G401 (cell line): ENCODE measurements at regions of chr5 and their contacts with region 1.

Region 1: DNA sequence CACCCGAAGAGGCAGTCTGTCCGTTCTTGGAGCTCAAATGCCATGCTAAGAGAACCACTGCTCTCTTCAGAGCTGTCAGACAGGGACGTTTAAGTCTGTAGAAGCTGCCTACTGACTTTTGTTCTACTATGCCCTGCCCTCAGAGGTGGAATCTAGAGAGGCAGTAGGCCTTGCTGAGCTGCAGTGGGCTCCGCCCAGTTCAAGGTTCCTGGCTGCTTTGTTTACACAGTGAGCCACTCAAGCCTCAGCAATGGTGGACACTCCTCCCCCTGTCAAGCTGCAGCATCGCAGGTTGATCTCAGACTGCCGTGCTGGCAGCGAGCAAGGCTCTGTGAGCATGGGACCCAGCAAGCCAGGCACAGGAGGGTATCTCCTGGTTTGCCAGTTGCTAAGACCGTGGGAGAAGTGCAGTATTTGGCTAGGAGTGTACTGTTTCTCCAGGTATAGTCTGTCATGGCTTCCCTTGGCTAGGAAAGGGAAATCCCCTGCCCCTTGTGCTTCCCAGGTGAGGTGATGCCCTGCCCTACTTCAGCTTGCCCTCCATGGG is 13.0 kb upstream of the BTNL8 start:
- DNase-seq: no peak

Region 2: DNA sequence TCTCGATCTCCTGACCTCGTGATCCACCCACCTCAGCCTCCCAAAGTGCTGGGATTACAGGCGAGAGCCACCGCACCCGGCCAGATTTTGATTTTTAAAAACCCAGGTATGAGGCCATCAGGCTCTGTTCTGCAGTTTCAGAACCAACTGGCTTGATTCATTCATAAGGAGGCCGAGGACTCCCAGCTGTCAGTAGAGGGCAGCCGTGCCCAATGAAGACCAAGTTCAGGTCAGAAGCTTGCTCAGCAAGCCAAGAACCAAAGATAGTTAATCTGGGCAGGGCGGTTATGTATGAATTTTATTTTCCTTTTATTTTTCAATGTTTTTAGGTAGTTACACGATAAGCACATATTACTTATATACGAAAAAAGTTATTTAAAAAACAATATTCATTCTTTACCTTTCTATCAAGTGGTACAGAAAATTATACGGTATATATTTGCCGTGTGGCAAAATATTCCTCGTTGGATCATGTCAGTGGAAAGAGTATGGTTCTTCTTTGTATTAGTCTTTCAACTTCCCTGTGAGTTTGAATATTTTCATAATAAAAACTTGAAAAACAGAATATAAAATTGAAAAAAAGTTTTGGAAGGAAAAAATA is 101.3 kb before region 1 on chr5:
- in situ Hi-C with region 1: loop called (anchors 5 kb)
- DNase-seq: peak; percentile 84